A549 (cell line): ENCODE measurements at regions of chr3 and their contacts with region 1.

Region 1: GRCh38 chr3:178436773-178437172 is 99.5 kb upstream of the KCNMB2 start:
- DNase-seq: peak; percentile 14 to 22
- ATAC-seq: peak in 1 of 2 experiments; percentile 37; a peak in 1 of 6 replicates
- H3K4me3 ChIP-seq: no peak overlapping the region
- H3K27ac ChIP-seq: no peak overlapping the region
- H3K4me1 ChIP-seq: peaks cover 10% of the 10 kb centered on the region; the same call in 2 of the 3 replicates
- CTCF ChIP-seq: peak; percentile 53
- EP300 ChIP-seq: no peak
- POLR2A ChIP-seq: no peak
- RAD21 ChIP-seq: peak; percentile 30 to 33; a peak in 3 of 5 replicates

Region 2: DNA sequence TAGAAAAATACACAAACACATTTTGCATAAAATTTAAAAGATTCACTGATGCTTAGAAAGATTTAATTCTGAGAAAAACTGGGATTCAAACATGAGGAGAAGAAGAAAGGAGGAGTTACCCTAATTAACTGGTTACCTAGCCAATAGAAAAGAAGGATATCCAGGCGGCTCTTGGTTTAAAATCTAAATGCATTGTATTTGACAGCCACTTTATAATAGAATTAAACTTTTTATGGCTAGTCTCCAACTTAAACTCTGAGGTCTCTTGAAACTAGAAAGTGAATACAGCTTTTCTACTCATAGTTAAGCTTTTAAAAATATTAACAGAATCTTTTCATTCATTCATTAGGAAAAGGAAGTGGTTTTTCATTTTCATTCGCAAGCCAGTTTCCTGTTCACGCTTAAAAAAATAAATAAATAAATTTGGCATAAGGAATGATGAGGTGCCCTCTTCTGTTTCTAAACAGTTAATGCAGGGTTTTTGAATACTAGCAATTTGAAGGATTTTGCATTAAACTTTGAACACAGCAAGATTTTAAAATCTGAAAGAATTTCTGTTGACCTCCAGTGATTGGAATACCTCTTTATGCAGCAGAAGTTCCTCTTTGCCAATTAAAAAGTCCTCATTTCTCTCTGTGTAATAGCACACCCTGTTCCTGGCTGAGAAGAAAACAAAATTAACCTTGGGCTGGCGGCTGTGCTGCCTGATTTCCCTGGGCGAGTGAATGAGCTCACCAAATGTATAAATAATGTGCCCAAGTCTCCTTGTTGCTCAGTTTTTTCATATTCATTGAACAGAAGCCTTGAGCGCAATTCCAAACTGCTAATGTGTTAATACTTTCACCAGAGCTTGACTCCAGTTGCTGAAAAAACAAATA is 529.8 kb after region 1 on chr3:
- CTCF ChIA-PET with region 1: interaction called, 16 read pairs
- POLR2A ChIA-PET with region 1: no interaction called
- DNase-seq: peak in 1 of 2 experiments; percentile 16
- ATAC-seq: no peak
- H3K4me3 ChIP-seq: no peak overlapping the region
- H3K27ac ChIP-seq: no peak overlapping the region
- H3K4me1 ChIP-seq: no peaks in the 10 kb centered on the region
- CTCF ChIP-seq: peak; percentile 52
- EP300 ChIP-seq: no peak
- POLR2A ChIP-seq: no peak
- RAD21 ChIP-seq: peak; percentile 56 to 58